ENCODE measurements at regions of chr2 and their contacts with region 1.

Region 1: DNA sequence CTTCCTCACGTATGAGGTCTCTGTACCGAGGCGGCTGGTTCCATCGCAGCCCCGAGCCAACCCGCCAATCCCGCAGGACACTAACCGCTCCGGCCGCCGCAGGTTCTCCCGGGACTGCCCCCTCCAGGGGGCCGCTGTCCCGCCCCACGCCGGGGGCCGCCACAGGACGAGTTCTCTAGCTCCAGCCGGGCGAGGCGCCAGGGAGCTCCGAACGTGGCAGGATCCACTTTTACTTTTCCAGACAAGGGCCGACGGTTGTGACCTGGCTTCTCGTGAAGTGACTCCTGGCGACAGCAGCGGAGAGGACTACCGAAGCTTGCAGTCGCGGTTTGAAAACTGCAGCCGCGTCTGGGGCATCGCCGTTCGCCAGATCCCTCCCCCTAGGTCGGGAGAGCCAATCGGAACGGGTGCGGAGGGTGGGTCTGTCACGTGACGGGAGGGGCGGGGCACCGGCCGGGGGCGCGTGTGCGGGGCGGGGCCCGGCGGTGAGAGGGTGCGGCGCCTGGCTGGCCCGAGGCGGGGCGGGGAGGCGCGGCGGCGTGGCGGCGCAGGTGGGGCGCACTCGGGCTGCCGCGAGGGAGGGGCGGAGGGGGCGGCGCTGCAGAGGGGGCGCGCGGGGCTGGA is at the start of gene STK17B:
- DNase-seq: peak; percentile 91
- H3K4me3 ChIP-seq: peak within 1 kb of the TSS; percentile 80 to 95 (median 90)
- H3K27ac ChIP-seq: peak within 1 kb of the TSS; percentile 88
- H3K4me1 ChIP-seq: peaks cover 27% of the 10 kb centered on the region
- H3K27me3 ChIP-seq: no peaks in the 10 kb centered on the region
- CTCF ChIP-seq: peak in 1 of 2 donors; percentile 20
- total RNA-seq, gene STK17B: 5.7 to 11.6 TPM

Region 2: DNA sequence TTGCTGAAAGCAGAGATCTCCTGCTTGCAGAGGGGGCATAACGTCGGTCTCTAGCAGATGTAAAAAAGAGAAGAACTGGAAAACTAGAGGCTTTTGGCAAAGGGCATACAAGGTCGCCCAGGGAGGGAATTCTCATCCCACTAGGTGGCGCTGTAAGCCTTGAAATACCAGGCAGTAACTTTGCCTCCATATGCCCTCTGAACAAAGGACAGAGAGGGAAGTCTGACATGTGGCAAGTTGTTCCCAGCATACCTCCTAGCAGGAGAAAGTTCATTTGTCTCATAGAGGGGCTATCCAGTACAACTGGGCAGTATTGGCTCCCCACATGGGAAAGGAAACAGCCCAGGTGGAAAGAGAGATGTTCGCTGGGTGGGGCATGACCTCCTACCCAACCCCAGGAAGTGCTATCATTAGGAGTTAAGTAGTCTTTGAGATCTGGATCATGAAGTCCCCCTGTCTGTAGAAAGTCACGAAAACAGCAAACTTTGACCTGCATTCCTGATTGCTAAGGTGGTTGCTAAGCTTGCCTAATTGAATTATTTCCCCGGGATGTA is 39.9 kb before region 1 on chr2:
- CTCF ChIA-PET with region 1: no interaction called
- dilution Hi-C with region 1: no loop called
- in situ Hi-C with region 1: no loop called
- intact Hi-C with region 1: loop called (anchors 5 kb)
- DNase-seq: peak; percentile 35
- H3K4me3 ChIP-seq: no peak overlapping the region
- H3K27ac ChIP-seq: no peak overlapping the region
- H3K4me1 ChIP-seq: no peaks in the 10 kb centered on the region
- H3K27me3 ChIP-seq: no peaks in the 10 kb centered on the region
- CTCF ChIP-seq: peak; percentile 57 to 59

Region 3: GRCh38 chr2:196233021-196233804 is 61.9 kb after region 1 on chr2:
- CTCF ChIA-PET with region 1: no interaction called
- dilution Hi-C with region 1: loop called (anchors 5 kb)
- in situ Hi-C with region 1: no loop called
- intact Hi-C with region 1: loop called (anchors 2 kb)
- DNase-seq: peak; percentile 95
- H3K4me3 ChIP-seq: peak overlapping the region in 2 of 3 experiments; percentile 6 to 15
- H3K27ac ChIP-seq: peak overlapping the region; percentile 97
- H3K4me1 ChIP-seq: peaks cover 37% of the 10 kb centered on the region
- H3K27me3 ChIP-seq: no peaks in the 10 kb centered on the region
- CTCF ChIP-seq: no peak

Region 4: DNA sequence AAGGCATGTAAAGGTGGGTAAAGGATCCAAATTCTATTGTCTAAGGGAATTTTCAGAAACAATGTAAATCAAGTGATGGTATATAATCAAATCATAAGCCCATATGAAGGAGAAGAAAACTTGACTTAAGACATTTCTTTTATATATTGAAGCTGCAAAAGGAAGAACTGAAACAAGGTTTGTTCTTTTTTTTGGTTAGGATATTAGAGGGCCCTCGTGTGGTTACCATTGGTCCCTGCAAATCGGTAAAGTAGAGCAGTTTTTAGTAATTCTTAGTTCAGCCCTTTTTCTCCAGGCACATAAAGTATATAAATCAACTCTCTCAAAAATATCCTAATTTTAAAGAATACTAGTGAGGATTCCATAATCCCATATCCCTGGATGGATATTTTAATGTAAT is 105.6 kb after region 1 on chr2:
- CTCF ChIA-PET with region 1: no interaction called
- dilution Hi-C with region 1: no loop called
- in situ Hi-C with region 1: loop called in 1 of 2 experiments (anchors 5 kb)
- intact Hi-C with region 1: loop called (anchors 1 kb)
- DNase-seq: peak; percentile 28
- H3K4me3 ChIP-seq: no peak overlapping the region
- H3K27ac ChIP-seq: no peak overlapping the region
- H3K4me1 ChIP-seq: no peaks in the 10 kb centered on the region
- H3K27me3 ChIP-seq: no peaks in the 10 kb centered on the region
- CTCF ChIP-seq: peak; percentile 65 to 70

Region 5: GRCh38 chr2:196291873-196292800 is 120.8 kb after region 1 on chr2:
- CTCF ChIA-PET with region 1: no interaction called
- dilution Hi-C with region 1: loop called (anchors 5 kb)
- in situ Hi-C with region 1: no loop called
- intact Hi-C with region 1: loop called (anchors 1 kb)
- DNase-seq: peak; percentile 97
- H3K4me3 ChIP-seq: peak overlapping the region in 1 of 3 experiments; percentile 10
- H3K27ac ChIP-seq: peak overlapping the region; percentile 91
- H3K4me1 ChIP-seq: peaks cover 51% of the 10 kb centered on the region
- H3K27me3 ChIP-seq: no peaks in the 10 kb centered on the region
- CTCF ChIP-seq: no peak

Region 6: GRCh38 chr2:196459539-196459938 is 288.2 kb after region 1 on chr2:
- CTCF ChIA-PET with region 1: no interaction called
- dilution Hi-C with region 1: no loop called
- in situ Hi-C with region 1: no loop called
- intact Hi-C with region 1: no loop called
- DNase-seq: peak; percentile 17
- H3K4me3 ChIP-seq: no peak overlapping the region
- H3K27ac ChIP-seq: no peak overlapping the region
- H3K4me1 ChIP-seq: no peaks in the 10 kb centered on the region
- H3K27me3 ChIP-seq: peaks cover 2% of the 10 kb centered on the region
- CTCF ChIP-seq: no peak